Ascending aorta (tissue), 2 donors: ENCODE measurements at regions of chr3 and their contacts with region 1.

Region 1: DNA sequence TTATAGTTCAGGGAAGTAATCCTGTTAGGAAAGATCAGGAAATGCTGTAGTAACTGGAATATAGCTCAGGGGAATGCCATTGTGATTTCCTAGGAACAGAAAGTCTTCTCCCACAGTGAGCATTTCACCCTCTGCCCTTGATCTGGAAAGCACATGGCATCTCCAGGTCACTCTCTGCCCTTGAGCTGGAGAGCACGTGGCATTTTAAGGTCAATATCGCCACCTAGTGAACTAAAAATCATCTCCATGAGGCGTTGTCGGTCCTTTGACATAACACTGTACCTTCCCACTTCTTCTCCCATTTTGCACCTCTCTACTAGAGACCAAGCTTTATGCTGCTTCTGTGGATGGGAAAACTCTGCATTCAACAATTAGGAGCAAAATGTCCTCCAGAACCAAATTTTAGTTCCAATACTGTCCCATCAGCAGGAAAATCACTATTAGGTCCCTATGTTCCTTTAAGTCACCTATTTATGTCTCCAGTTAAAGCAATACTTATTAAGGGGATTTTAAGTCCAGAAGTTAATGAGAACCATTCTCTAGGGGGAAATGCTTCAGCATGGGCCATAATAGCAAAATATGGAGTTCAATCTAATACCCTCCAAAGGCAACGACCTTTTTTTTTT is 54.7 kb upstream of the GK5 start:
- DNase-seq: peak in 1 of 2 donors; percentile 71
- H3K4me3 ChIP-seq: no peak overlapping the region
- H3K27ac ChIP-seq: no peak overlapping the region
- H3K4me1 ChIP-seq: peaks cover 5 to 23% of the 10 kb centered on the region in 2 donors
- H3K27me3 ChIP-seq: no peaks in the 10 kb centered on the region
- CTCF ChIP-seq: peak; percentile 50 to 70 (median 63)

Region 2: GRCh38 chr3:141094790-141095545 is 1185.1 kb before region 1 on chr3:
- intact Hi-C with region 1: no loop called
- DNase-seq: peak; percentile 52 to 93
- H3K4me3 ChIP-seq: peak overlapping the region; percentile 15 to 46
- H3K27ac ChIP-seq: peak overlapping the region; percentile 63 to 73
- H3K4me1 ChIP-seq: peaks cover 3 to 27% of the 10 kb centered on the region in 2 donors
- H3K27me3 ChIP-seq: no peaks in the 10 kb centered on the region
- CTCF ChIP-seq: no peak

Region 3: DNA sequence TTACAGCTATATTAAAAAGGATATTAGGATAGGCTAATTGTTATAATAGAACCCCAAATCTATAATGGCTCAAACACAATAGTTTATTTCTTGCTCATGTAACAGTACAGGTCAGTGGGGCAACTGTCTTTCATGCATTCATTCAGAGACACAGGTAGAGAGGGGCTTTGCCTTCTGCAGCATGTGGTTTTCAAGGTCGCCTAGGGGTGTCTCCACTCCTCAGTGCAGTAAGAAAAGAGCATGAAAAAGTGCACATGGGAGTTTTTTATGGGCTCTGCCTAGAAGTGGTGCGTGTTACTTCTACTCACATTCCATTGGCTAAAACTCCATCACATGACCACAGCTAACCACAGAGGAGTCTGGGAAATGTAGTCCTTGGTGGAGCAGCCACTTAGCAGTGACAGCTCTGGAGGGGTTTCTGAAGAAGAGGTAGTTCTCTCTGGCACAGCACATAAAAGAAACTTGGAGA is 910.0 kb before region 1 on chr3:
- intact Hi-C with region 1: loop called (anchors 5 kb)
- DNase-seq: peak; percentile 26 to 83
- H3K4me3 ChIP-seq: peak overlapping the region; percentile 52 to 61
- H3K27ac ChIP-seq: peak overlapping the region; percentile 98 to 99
- H3K4me1 ChIP-seq: peaks cover 6 to 37% of the 10 kb centered on the region in 2 donors
- H3K27me3 ChIP-seq: no peaks in the 10 kb centered on the region
- CTCF ChIP-seq: peak; percentile 29 to 60 (median 59)

Region 4: DNA sequence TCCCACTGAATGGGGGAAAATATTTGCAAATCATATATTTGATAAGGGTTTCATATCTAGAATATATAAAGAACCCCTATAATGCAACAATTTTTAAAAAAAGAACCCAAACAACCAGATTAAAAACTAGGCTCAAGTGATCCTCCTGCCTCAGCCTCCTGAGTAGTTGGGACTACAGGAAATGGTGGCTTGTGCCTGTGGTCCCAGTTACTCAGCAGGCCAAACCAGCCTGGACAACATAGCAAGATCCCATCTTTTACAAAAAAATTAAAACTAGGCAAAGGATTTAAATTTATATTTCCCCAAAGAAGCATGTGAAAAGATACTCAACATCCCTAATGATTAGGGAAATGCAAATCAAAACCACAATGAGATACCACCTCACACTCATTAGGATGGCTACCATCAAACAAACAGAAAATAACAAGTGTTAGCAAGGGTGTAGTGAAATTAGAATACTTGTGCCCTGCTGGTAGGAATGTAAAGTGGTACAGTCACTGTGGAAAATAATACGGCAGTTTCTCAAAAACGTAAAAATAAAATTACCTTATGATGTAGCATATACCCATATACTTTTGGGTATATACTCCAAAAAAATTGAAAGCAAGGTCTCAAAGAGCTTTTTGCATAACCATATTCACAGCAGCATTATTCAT is 150.4 kb before region 1 on chr3:
- intact Hi-C with region 1: loop called (anchors 1 kb)
- DNase-seq: no peak
- H3K4me3 ChIP-seq: no peak overlapping the region
- H3K27ac ChIP-seq: no peak overlapping the region
- H3K4me1 ChIP-seq: no peaks in the 10 kb centered on the region
- H3K27me3 ChIP-seq: no peaks in the 10 kb centered on the region
- CTCF ChIP-seq: no peak

Region 5: DNA sequence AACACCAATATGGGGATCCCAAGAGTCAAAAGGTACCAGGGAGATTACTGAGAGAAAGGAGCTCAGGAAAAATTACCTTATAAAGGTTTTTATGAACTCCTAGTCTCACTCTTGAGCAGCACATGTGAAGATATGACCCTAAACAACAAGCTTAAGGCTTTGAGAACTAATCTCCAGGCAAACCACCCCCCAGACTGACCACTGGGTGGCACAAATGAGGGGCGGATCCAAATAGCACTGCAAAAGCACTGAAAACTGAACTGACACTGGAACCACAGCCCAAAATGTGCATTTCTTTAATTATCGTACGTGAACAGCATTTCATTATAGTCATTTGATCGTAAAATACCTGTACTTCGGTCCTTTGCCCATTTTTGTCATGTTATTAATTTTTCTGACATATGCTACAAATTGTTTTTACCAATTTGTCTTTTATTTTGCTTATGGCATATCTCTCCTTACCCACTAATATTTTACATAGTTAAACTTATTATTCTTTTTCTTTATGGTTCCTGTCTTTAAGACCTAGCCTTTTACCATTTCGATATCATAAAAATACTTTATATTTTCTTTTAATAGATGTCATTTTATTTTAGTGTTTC is 99.2 kb before region 1 on chr3:
- intact Hi-C with region 1: loop called (anchors 1 kb)
- DNase-seq: no peak
- H3K4me3 ChIP-seq: no peak overlapping the region
- H3K27ac ChIP-seq: no peak overlapping the region
- H3K4me1 ChIP-seq: no peaks in the 10 kb centered on the region
- H3K27me3 ChIP-seq: no peaks in the 10 kb centered on the region
- CTCF ChIP-seq: peak; percentile 36 to 58 (median 55)

Region 6: DNA sequence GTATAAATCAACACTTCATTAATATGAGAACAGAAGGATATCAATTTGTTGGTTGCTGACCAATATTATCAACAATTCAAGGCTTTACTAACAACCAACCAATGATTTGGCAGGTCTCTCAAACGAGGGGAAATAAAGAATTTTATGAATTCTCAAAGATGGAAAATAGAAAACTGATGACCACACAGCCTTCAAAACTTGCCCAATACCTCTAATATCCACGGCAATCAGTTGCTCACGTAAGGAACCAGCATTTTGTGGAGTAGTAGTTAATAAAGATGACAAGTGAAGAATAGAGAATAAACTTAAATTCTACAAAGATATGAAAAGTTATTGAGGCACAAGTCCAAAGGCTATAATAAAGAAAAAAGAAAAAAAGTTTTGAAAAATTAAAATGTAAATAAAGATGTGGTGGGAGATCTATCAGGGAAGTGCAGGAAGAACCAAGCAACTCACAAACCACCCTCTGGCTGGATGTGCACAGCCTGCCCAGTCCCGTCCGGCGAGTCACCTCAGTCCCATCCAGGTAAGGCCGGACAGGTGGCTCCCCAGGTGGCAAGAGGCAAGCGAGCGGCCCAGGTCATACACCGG is 55.5 kb before region 1 on chr3:
- intact Hi-C with region 1: loop called (anchors 2 kb)
- DNase-seq: no peak
- H3K4me3 ChIP-seq: peak overlapping the region; percentile 83 to 97
- H3K27ac ChIP-seq: peak overlapping the region; percentile 90 to 96
- H3K4me1 ChIP-seq: peaks cover 3 to 18% of the 10 kb centered on the region in 2 donors
- H3K27me3 ChIP-seq: no peaks in the 10 kb centered on the region
- CTCF ChIP-seq: no peak

Region 7: DNA sequence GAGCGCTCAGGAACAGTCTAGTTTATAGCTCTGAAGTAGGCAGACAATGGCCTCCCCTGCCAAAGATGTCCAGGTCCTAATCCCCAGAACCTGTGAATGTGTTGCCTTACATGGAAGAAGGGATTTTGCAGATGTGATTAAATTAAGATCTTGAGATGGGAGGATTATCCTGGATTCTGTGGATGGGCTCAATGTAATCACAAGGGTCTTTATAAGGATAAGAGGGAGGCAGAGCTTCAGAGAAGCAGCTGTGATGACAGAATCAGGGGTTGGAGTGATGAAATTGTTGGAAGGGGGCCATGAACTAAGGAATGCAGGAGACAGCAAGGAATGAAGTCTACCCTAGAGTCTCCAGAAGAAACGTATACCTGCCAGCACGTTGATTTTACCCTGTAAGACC is 40.7 kb before region 1 on chr3:
- intact Hi-C with region 1: no loop called
- DNase-seq: no peak
- H3K4me3 ChIP-seq: no peak overlapping the region
- H3K27ac ChIP-seq: no peak overlapping the region
- H3K4me1 ChIP-seq: no peaks in the 10 kb centered on the region
- H3K27me3 ChIP-seq: no peaks in the 10 kb centered on the region
- CTCF ChIP-seq: no peak

Region 8: DNA sequence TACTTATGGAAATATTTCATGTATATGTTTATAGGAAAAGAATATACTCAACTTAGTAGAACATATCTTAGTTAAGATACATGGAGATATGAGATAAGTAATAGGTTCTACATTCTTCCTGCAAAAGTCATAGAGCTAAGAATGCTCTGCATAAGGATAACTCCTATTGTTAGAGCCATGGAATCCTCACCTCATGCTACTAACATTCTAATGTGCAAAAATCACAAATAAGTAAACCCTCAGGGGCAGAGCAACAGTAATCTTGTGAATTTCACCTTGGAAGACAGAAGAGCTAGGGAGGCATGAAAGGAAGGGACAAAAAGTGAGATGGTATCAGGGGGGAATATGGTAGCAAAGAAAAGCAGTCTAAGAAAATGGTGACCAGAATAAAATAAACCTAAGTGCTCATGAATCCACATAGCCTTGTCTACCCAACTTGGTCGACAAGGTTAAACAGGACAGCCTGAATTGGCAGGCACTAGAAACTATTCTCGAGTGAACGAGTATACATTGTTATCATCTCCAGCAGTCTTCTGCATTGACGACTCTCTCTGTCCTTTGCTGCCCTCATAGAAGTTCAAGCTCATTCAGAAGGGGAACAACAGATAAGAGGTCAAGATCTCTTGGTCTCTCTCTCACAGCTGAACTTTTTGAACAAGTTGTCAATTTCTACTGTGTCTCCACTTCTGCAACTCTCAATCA is 115.0 kb after region 1 on chr3:
- intact Hi-C with region 1: no loop called
- DNase-seq: no peak
- H3K4me3 ChIP-seq: no peak overlapping the region
- H3K27ac ChIP-seq: no peak overlapping the region
- H3K4me1 ChIP-seq: no peaks in the 10 kb centered on the region
- H3K27me3 ChIP-seq: no peaks in the 10 kb centered on the region
- CTCF ChIP-seq: no peak

Region 9: DNA sequence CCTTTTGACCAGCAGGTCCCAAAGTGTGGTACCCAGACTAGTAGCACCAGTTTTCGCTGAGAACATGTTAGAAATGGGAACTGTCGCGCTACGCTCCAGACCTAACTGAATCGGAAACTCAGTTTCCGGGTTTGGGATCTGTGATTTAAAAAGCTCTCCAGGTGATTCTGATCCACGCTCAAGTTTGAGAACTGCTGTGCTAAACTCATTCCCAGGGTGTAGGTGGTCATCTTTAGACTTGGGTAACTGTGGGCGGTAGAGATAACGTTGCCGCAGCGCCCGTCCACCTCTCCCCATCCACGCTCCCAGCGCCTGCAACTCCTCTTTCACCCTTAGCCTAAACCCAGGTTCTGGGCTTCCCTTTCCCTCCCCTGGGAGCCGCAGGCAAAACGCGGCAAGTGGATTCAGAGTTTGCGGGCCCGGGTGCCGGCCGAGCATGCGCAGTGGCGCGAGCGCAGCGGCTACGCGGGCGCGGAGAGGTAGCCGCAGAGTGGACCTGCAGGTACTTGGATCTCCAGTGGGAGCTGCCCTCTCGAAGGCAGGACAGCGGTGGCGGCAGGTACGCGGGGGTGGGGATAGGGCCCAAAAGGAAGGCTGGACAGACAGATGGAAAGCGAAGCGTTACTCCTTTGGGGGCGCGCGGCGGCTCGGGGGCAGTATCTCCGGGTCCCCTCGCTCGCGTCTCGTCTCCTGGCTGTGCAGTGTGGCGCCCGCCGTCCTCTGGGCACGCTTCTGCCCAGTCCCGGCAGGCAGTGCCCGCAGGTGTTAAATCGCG is 316.1 kb after region 1 on chr3 and contains the start of gene PLS1:
- intact Hi-C with region 1: no loop called
- DNase-seq: peak; percentile 37 to 89
- H3K4me3 ChIP-seq: peak within 1 kb of the TSS; percentile 67 to 73
- H3K27ac ChIP-seq: peak within 1 kb of the TSS; percentile 46 to 56
- H3K4me1 ChIP-seq: peaks cover 0 to 3% of the 10 kb centered on the region in 2 donors
- H3K27me3 ChIP-seq: no peaks in the 10 kb centered on the region
- CTCF ChIP-seq: no peak
- total RNA-seq, gene PLS1: 1.8 TPM